ENCODE measurements at regions of chr15 and their contacts with region 1.

Region 1: DNA sequence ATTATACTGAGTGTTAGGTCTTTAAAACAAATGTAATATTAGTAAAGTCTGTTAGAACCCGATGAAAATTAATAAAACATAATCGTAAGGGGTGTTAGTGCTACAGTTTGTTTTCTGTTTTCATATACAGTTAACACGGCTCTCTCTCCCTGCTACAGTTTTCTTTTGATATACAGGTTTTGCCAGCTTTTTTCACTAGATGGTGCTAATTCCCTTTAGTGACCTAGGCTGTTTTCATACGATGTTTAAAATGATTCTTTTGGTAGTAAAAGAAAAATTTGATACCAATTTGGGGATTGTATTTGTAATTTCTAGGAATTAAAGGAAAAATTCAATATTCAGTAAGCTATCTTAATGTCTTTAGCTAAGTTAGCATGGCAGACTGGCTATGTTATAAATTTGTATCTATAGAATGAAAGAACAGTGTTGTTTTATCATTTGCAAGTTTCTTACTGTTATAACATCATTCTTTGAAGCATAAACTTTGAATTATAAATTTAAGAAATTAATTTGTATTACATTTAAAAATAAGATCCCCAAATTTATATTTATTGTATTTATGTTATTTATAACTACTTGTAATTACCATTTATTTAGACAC is 11.5 kb downstream of the APH1B start:
- DNase-seq: no peak
- ATAC-seq: peak; percentile 82
- H3K4me3 ChIP-seq: no peak overlapping the region
- H3K27ac ChIP-seq: no peak overlapping the region
- H3K4me1 ChIP-seq: no peaks in the 10 kb centered on the region
- H3K27me3 ChIP-seq: no peaks in the 10 kb centered on the region
- CTCF ChIP-seq: peak; percentile 54 to 71 (median 60)
- EP300 ChIP-seq: no peak
- POLR2A ChIP-seq: no peak
- RAD21 ChIP-seq: peak; percentile 87

Region 2: GRCh38 chr15:63166219-63166618 is 122.7 kb before region 1 on chr15:
- CTCF ChIA-PET with region 1: interaction called, 10 read pairs
- POLR2A ChIA-PET with region 1: interaction called, 3 read pairs
- RAD21 ChIA-PET with region 1: interaction called, 4 read pairs
- SMC1A ChIA-PET with region 1: interaction called, 11 read pairs
- in situ Hi-C with region 1: no loop called
- intact Hi-C with region 1: no loop called
- DNase-seq: no peak
- ATAC-seq: peak; percentile 65
- H3K4me3 ChIP-seq: no peak overlapping the region
- H3K27ac ChIP-seq: no peak overlapping the region
- H3K4me1 ChIP-seq: peaks cover 9% of the 10 kb centered on the region
- H3K27me3 ChIP-seq: no peaks in the 10 kb centered on the region; a peak in 1 of 4 replicates
- CTCF ChIP-seq: peak in 2 of 3 experiments; percentile 18 to 40; a peak in 2 of 6 replicates
- EP300 ChIP-seq: no peak
- POLR2A ChIP-seq: no peak
- RAD21 ChIP-seq: peak; percentile 49

Region 3: GRCh38 chr15:63312286-63312685 is 23.4 kb after region 1 on chr15:
- CTCF ChIA-PET with region 1: interaction called, 6 read pairs
- POLR2A ChIA-PET with region 1: no interaction called
- RAD21 ChIA-PET with region 1: interaction called, 3 read pairs
- SMC1A ChIA-PET with region 1: interaction called, 10 read pairs
- in situ Hi-C with region 1: no loop called
- intact Hi-C with region 1: no loop called
- DNase-seq: no peak
- ATAC-seq: no peak
- H3K4me3 ChIP-seq: no peak overlapping the region
- H3K27ac ChIP-seq: no peak overlapping the region
- H3K4me1 ChIP-seq: no peaks in the 10 kb centered on the region
- H3K27me3 ChIP-seq: no peaks in the 10 kb centered on the region
- CTCF ChIP-seq: no peak
- EP300 ChIP-seq: no peak
- POLR2A ChIP-seq: no peak
- RAD21 ChIP-seq: no peak

Region 4: GRCh38 chr15:63396152-63396928 is 107.5 kb after region 1 on chr15:
- CTCF ChIA-PET with region 1: interaction called, 145 read pairs
- POLR2A ChIA-PET with region 1: no interaction called
- RAD21 ChIA-PET with region 1: interaction called, 62 read pairs
- SMC1A ChIA-PET with region 1: interaction called, 92 read pairs
- in situ Hi-C with region 1: loop called (anchors 5 kb)
- intact Hi-C with region 1: no loop called
- DNase-seq: no peak
- ATAC-seq: no peak
- H3K4me3 ChIP-seq: no peak overlapping the region
- H3K27ac ChIP-seq: no peak overlapping the region
- H3K4me1 ChIP-seq: no peaks in the 10 kb centered on the region; the same call in 1 of the 2 replicates
- H3K27me3 ChIP-seq: peaks cover 0 to 4% of the 10 kb centered on the region in 2 experiments; a peak in 2 of 4 replicates
- CTCF ChIP-seq: no peak
- EP300 ChIP-seq: no peak
- POLR2A ChIP-seq: no peak
- RAD21 ChIP-seq: no peak

Region 5: DNA sequence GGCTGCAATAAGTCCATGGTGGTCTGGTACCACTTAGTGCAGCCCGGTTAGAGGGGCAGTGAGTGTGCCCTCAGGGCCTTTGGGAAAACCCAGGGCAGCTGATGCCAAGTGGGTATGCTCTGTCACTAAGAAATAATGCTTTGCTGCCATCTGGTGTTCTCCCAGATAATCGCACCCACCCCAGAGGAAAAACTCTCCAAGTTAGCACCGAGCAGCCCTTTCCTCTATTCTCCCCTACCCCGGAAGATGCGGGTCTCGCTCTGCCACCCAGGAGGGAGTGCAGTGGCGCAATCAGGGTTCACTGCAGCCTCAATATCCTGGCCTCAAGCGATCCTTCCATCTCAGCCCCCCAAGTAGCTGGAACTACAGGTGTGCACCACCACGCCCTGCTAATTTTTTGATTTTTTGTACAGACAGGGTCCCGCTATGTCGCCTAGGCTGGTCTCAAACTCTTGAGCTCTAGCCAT is 778.7 kb after region 1 on chr15:
- CTCF ChIA-PET with region 1: interaction called, 12 read pairs
- POLR2A ChIA-PET with region 1: no interaction called
- RAD21 ChIA-PET with region 1: no interaction called
- SMC1A ChIA-PET with region 1: no interaction called
- in situ Hi-C with region 1: loop called (anchors 5 kb)
- intact Hi-C with region 1: no loop called
- DNase-seq: peak; percentile 40
- ATAC-seq: peak; percentile 94
- H3K4me3 ChIP-seq: no peak overlapping the region
- H3K27ac ChIP-seq: no peak overlapping the region
- H3K4me1 ChIP-seq: peaks cover 13% of the 10 kb centered on the region
- H3K27me3 ChIP-seq: no peaks in the 10 kb centered on the region
- CTCF ChIP-seq: peak; percentile 72 to 83 (median 77)
- EP300 ChIP-seq: no peak
- POLR2A ChIP-seq: no peak
- RAD21 ChIP-seq: peak; percentile 89